Activated naive CD8-positive, alpha-beta T cell treated with anti-CD3 and anti-CD28 coated beads, Interleukin-2, amount 10 ng/mL, durations not matched to agents 7 days and 5 days (primary cell): ENCODE measurements at regions of chr16 and their contacts with region 1.

Region 1: DNA sequence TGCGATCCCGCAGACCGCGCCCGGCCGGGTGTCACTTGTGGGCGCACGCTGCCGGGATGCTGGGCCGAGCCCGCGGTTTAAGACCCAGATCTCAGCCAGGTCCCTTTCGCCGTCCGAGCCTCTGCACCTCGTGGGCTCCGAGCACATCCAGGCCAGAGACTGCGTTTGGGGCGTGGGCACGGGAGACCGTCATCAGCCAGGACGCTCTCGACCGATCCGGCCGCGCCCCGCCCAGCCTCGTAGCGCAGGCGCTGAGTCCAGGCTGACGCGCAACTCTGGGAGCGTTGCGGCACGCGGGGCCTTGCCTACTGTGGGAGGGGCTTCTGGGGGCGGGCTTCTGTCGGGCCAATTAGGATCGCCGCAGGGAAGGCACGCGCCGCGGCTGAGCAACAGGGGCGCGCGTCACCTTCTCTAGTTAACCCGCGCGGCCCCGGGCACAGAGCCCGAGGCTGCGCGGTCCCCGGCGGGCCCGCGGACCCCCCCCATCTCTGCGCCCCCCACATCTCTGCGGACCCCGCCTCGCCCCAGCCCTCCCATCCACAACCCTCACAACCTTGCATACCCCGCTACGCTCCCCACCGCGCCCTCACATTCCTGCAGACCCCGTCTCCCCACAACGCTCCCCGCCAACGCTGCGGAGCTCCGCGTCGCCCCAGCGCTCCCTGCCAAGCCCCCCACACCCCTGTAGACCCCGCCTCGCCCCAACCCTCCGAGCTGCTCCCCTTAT is 722 bp upstream of the CEMP1 start:
- DNase-seq: peak; percentile 97
- ATAC-seq: peak; percentile 91
- H3K4me3 Mint-ChIP-seq: peak overlapping the region; percentile 96
- H3K27ac Mint-ChIP-seq: peak overlapping the region; percentile 100
- H3K4me1 Mint-ChIP-seq: peaks cover 14% of the 10 kb centered on the region
- H3K27me3 Mint-ChIP-seq: no peaks in the 10 kb centered on the region

Region 2: DNA sequence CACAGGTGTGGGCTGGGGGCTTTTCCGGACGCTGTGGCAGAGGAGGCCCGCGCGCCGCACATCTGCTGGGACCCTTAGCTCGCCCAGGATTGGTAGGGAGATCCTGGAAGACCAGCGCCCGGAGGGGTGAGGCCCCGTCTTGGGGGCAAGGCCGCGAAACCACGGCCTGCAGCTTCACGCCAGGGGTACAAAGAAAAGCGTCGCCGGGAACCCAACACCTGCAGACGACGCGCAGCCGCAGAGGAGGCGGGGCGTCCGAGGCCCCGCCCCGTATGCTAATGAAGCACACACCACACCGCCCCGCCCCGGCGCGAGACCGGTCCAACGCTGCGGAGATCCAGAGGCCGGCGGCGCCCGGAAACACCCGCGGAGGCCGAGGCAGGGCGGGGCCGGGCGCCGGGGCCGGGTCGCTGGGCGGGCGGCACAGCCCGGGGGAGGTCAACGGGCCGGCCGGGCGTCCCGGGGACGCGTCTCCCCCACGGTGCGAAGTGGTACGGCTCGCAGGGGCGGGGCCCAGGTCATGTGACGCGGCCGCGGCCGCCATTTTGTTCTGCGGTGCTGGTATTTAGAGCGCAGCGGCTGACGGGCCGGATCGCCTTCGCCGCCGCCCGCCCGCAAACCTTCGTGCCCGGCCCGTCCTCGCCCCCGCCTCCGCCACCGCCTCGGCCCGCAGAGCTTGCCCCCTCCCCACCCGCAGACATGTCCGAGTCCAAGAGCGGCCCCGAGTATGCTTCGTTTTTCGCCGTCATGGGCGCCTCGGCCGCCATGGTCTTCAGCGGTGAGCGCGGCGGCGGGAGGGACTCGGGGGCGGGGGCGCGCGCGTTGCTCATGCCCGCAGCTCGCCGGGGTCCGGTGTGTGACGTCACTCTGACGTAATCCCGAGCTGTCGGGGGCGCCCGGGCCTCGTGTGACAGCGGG is 18.3 kb before region 1 on chr16 and contains the start of gene ATP6V0C:
- POLR2A ChIA-PET with region 1: interaction called, 69 read pairs
- DNase-seq: peak; percentile 97
- ATAC-seq: peak; percentile 85
- H3K4me3 Mint-ChIP-seq: peak within 1 kb of the TSS; percentile 94
- H3K27ac Mint-ChIP-seq: peak within 1 kb of the TSS; percentile 95
- H3K4me1 Mint-ChIP-seq: peaks cover 32% of the 10 kb centered on the region
- H3K27me3 Mint-ChIP-seq: peaks cover 8% of the 10 kb centered on the region
- total RNA-seq, gene ATP6V0C: 117 to 122 TPM

Region 3: DNA sequence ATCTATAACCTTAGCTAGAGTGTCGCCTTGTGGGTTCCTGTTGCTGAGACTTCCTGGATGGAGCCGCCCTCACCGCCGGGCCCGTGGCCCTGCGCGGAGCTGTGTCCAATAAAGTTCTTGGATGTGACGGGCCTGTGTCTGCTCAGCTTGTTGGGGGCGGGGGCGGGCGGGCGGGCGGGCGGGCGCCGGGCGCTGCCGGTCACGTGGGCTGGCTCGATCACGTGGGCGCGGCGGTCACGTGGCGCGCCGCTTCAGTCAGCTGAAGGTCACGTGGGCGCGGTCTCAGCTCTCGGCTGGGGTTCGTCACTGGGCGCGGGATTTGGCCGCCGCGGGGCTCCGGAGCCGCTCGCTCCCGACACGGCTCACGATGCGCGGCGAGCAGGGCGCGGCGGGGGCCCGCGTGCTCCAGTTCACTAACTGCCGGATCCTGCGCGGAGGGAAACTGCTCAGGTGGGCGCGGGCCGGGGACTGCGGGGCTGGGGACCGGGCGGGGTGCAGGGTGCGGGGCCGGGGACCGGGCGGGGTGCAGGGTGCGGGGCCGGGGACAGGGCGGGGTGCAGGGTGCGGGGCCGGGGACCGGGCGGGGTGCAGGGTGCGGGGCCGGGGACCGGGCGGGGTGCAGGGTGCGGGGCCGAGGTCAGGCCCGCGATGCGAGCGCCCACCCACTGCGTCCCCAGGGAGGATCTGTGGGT is 11.7 kb before region 1 on chr16 and contains the start of gene AMDHD2:
- POLR2A ChIA-PET with region 1: interaction called, 69 read pairs
- DNase-seq: peak; percentile 92
- ATAC-seq: peak; percentile 64
- H3K4me3 Mint-ChIP-seq: peak within 1 kb of the TSS; percentile 83
- H3K27ac Mint-ChIP-seq: peak within 1 kb of the TSS; percentile 93
- H3K4me1 Mint-ChIP-seq: peaks cover 34% of the 10 kb centered on the region
- H3K27me3 Mint-ChIP-seq: no peaks in the 10 kb centered on the region
- total RNA-seq, gene AMDHD2: 74.0 to 75.4 TPM